Mammary epithelial cell (primary cell): ENCODE measurements at regions of chr3 and their contacts with region 1.

Region 1: DNA sequence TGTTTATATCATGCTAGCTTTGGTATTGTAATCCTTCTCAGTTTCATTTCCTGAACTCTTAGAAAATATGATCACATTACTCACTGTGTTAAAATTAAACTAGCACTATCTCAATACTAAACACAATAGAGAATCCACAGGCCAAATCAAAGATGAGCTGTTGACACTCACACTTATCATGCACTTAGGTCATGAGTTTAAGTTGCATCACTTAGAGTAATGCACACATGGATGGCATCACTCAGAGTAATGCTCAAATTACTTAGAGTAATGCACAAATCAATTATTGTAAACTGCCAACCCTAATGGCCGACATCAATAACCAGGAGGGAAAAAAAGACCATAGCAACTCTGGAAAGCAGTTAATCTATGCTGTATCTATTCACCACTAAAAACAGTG is 40.0 kb upstream of the MCF2L2 start:
- DNase-seq: no peak
- H3K4me3 ChIP-seq: no peak overlapping the region
- H3K27ac ChIP-seq: no peak overlapping the region
- H3K4me1 ChIP-seq: no peaks in the 10 kb centered on the region
- H3K27me3 ChIP-seq: peaks cover 2% of the 10 kb centered on the region
- CTCF ChIP-seq: no peak

Region 2: DNA sequence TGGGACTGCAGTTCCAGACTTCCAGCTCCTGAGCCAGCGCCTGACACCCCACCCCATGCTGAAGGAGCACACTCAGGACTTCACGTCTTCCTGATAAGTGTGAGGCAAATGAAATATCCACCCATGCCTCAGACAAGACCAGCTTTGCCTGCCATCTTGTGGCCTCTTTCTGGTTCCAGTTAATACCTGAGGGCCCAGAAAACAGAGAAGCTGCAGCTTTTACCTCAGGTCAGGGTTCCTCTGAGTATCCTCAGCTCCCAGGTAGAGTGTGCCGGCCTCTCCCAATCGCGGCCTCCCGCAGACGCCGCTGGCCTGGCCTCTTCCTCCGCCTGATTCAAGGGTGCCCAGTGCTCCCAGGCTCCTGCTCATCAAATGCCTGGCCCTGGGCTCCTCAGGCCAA is 92.2 kb after region 1 on chr3:
- CTCF ChIA-PET with region 1: no interaction called
- dilution Hi-C with region 1: no loop called
- in situ Hi-C with region 1: no loop called
- intact Hi-C with region 1: loop called (anchors 1 kb)
- DNase-seq: peak; percentile 36
- H3K4me3 ChIP-seq: no peak overlapping the region
- H3K27ac ChIP-seq: no peak overlapping the region
- H3K4me1 ChIP-seq: peaks cover 4% of the 10 kb centered on the region
- H3K27me3 ChIP-seq: no peaks in the 10 kb centered on the region
- CTCF ChIP-seq: peak in 1 of 2 donors; percentile 58

Region 3: GRCh38 chr3:183635431-183636220 is 167.2 kb after region 1 on chr3 and contains the start of gene KLHL24:
- CTCF ChIA-PET with region 1: no interaction called
- dilution Hi-C with region 1: no loop called
- in situ Hi-C with region 1: no loop called
- intact Hi-C with region 1: loop called (anchors 5 kb)
- DNase-seq: peak; percentile 88
- H3K4me3 ChIP-seq: peak within 1 kb of the TSS; percentile 79 to 98 (median 94)
- H3K27ac ChIP-seq: peak within 1 kb of the TSS; percentile 62
- H3K4me1 ChIP-seq: peaks cover 4% of the 10 kb centered on the region
- H3K27me3 ChIP-seq: no peaks in the 10 kb centered on the region
- CTCF ChIP-seq: no peak
- total RNA-seq, gene KLHL24: 10.2 to 100 TPM

Region 4: DNA sequence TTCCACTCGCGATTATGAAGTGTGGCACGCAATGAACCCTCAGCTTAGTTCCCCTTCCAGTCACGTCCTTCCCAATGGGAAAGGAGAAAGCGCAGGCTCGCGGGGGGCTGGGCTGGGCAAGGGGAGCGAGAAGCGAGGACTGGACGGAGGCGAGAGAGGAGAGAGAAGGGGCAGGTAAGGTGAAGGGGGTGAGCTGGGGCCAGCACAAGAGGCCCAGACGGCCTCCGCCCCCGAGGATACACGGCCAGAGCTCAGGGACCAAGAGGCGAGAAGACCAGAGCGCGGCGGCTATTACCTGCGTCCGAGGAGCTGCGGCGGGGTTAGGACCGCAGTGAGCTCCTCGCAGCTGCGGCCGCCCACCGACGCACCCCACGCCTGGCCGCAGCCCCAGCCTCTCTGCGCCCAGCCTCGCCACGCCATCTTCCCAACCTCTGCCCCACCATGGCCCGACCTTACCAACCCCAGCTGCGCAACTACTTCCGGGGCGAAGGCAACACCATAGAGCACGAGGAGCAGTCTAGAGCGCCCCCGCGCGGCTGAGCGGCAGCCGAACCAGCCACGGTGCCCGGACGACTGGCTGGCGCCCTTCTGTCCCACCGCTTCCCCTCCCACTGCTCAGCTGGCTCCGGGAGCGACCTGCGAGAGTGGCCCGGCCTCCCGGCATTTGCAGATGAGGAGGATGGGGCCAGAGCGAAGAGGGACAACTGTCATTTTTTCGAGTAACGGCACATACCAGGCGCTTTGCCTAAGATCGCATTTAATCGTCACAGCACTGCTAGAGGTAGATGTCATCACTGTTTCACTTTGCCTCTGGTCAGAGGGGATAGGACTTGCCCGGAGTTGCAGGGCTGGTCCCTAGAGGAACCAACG is 416.2 kb after region 1 on chr3 and contains the start of gene PARL:
- CTCF ChIA-PET with region 1: interaction called, 3 read pairs
- dilution Hi-C with region 1: no loop called
- in situ Hi-C with region 1: no loop called
- intact Hi-C with region 1: loop called (anchors 1 kb)
- DNase-seq: peak; percentile 84
- H3K4me3 ChIP-seq: peak within 1 kb of the TSS; percentile 76 to 98 (median 93)
- H3K27ac ChIP-seq: peak within 1 kb of the TSS; percentile 60
- H3K4me1 ChIP-seq: peaks cover 7% of the 10 kb centered on the region
- H3K27me3 ChIP-seq: no peaks in the 10 kb centered on the region
- CTCF ChIP-seq: peak; percentile 72 to 95
- total RNA-seq, gene PARL: 33.0 to 70.4 TPM